ENCODE measurements at regions of chr12 and their contacts with region 1.

Region 1: DNA sequence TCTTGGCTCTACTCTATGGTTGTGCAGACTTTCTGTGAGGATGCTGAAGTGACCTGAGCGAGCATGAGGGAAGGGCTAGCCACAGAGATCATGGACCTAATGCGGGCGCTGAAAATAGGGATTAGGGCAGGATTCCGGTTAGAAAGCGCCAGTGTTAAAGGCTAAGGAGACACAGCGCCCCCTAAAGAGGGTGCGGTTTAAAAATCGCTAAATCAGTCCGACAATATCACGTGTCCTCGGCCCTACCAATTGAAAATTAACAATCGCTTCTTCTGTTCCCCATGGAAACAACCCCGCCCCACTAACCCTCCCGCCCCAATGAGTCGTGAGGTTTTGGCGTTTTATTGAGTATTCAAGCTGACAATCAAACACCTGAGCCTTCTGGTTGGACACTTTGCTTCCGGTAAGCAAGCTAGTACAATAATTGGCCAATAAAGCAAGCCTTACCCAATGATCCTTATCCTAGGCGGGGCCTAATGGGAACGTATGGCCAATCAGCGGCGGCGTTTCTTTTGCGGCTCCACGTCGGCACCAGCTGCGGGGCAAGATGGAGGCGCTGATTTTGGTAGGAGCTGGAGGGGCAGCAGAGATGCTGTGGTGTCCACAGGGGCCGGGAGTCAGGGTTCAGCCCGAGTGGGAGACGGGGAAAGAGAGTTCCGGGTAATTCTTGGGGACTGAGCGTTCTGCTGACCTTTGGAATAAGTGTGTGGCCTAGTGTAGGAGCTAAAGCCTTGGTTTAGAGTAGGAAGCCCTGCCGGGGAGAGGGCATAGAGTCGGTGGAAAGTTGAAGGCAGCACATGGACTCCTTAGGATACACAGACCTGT is at the start of gene COPZ1:
- DNase-seq: peak; percentile 96
- H3K4me3 Mint-ChIP-seq: peak within 1 kb of the TSS; percentile 92
- H3K27ac Mint-ChIP-seq: peak within 1 kb of the TSS; percentile 91
- H3K4me1 Mint-ChIP-seq: peaks cover 45% of the 10 kb centered on the region
- H3K27me3 Mint-ChIP-seq: no peaks in the 10 kb centered on the region
- total RNA-seq, gene COPZ1: 126 to 130 TPM

Region 2: DNA sequence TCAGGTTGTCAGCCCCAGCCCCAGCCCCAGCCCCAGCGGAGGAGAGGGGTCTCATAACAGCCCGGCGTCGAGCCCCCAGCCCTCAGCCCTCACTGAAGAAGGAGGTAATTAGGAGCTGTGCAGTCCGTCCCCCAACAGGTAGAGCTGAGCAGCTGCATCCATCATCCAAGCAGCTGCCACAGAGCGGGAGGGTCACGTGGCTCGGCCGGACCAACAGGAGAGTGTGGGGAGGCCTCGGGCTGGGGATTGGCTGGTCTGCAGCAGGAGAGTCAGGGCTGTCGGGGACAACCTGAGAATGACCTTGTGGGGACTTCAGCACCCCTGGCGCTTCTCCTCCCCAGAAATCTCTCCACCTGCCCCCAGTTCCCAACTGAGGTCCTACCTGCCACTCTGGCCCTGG is 165.7 kb before region 1 on chr12:
- CTCF ChIA-PET with region 1: no interaction called
- POLR2A ChIA-PET with region 1: no interaction called
- DNase-seq: peak; percentile 18
- H3K4me3 Mint-ChIP-seq: no peak overlapping the region
- H3K27ac Mint-ChIP-seq: no peak overlapping the region
- H3K4me1 Mint-ChIP-seq: no peaks in the 10 kb centered on the region
- H3K27me3 Mint-ChIP-seq: peaks cover 15% of the 10 kb centered on the region

Region 3: DNA sequence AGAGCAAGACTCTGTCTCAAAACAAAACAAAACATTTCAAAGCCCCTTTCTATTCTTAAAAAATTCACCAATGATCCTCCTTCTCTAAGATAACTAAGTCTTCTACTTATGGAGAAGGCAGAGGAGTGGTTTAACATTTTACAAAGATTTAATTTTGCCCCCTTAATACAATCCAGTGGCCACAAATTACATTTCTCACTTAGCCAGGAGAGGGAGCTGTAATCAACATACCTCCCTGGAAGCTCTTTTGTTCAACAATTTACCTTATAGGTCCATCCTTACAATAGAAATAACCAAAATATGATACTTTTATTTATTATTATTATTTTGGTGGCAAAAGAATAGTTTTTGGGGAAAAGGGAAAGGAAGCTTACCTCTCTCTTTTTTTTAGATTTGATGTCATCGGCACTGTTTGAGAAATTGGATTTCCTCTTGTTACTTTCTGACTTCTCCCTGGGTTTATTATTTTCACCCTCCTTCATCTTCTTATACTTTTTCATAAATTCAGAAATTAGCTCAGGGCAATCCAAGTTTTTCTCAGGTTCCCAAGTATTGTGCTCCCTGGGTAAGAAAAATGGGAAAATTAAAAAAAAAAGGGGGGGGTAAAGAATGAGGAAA is 73.1 kb before region 1 on chr12:
- CTCF ChIA-PET with region 1: interaction called, 15 read pairs
- POLR2A ChIA-PET with region 1: no interaction called
- DNase-seq: no peak
- H3K4me3 Mint-ChIP-seq: no peak overlapping the region
- H3K27ac Mint-ChIP-seq: no peak overlapping the region
- H3K4me1 Mint-ChIP-seq: peaks cover 2% of the 10 kb centered on the region
- H3K27me3 Mint-ChIP-seq: no peaks in the 10 kb centered on the region

Region 4: DNA sequence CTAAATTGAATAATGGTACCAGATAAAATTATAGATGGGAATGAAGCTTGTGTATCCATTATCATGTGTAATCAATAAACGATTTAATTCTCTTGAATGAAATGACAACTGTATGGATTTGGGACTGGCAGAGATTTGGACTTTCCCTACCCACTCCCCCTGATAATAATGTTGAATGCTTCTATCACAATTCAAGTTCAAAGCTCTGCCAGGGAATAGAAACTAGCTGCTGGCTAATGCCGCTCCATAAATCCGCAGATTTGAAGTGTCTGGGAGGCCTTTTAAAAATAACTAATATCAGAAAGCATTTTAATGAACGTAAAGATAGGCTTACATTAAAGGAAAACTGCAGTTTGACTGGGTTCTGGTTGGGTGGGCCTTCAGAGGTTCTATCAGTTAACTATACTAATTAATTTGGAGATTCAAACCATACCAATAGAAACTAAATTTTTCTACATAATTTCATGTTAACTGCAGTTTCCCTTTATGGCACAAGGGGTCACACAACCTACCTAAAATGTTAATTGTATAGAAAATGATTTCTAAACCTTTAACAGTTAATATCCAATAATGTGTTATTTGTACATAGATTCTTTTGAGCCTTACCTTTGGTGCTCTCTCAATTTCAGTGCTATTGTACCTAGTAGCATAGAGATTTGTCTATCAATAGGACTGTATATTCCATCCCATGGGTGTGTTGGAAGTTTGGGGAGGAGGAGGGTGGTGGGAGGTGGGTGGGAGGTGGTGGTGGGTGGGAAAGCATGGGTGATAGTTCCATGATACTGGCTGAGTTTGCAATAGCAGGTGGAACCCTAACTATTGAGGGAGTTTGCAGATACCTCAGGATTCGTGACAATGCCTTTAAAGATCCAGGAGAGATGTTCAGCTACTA is 39.4 kb before region 1 on chr12:
- CTCF ChIA-PET with region 1: interaction called, 34 read pairs
- POLR2A ChIA-PET with region 1: interaction called, 28 read pairs
- DNase-seq: no peak
- H3K4me3 Mint-ChIP-seq: no peak overlapping the region
- H3K27ac Mint-ChIP-seq: peak overlapping the region; percentile 3
- H3K4me1 Mint-ChIP-seq: peaks cover 56% of the 10 kb centered on the region
- H3K27me3 Mint-ChIP-seq: no peaks in the 10 kb centered on the region

Region 5: DNA sequence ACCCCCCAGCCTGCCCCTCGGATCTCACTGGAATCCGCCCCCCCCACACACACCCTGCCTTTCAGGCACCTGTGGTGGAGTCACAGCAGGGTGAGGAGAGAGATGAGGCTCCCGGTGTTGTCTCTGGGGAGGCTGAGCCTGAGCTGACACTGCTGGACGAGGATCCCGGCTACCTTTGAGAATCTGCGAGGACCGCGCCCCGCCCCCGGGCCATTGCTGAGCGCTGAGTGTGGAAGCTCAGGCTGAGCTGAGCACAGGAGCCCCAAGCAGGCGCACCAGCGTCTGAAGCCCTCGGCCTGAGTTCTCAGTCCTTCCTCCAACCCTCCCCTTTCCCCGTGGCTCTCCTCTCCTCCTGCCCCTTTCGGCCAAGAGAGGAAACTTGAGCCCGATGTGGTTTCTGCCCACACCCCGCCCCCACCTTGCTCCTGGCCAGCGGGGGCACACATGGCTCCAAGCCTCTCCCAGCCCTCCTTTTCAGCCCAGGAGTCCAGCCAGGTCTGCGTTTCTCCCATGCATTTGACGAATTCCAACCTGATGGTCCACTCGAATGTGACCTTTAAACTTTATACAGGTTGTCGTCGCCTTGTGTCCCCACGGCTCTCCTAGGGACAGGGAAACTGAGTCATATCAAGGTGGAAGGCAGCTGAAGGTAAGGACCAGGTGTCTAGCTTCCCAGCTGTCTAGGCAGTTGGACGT is 23.9 kb before region 1 on chr12 and contains the start of gene NFE2:
- CTCF ChIA-PET with region 1: interaction called, 72 read pairs
- POLR2A ChIA-PET with region 1: no interaction called
- DNase-seq: peak; percentile 30
- H3K4me3 Mint-ChIP-seq: no peak within 1 kb of the TSS
- H3K27ac Mint-ChIP-seq: no peak within 1 kb of the TSS
- H3K4me1 Mint-ChIP-seq: peaks cover 36% of the 10 kb centered on the region
- H3K27me3 Mint-ChIP-seq: peaks cover 67% of the 10 kb centered on the region
- total RNA-seq, gene NFE2: 0.20 TPM in 1 of 2 experiments, not detected in the other

Region 6: GRCh38 chr12:54359033-54359761 is 34.4 kb after region 1 on chr12:
- CTCF ChIA-PET with region 1: interaction called, 33 read pairs
- POLR2A ChIA-PET with region 1: interaction called, 15 read pairs
- DNase-seq: peak; percentile 97
- H3K4me3 Mint-ChIP-seq: no peak overlapping the region
- H3K27ac Mint-ChIP-seq: no peak overlapping the region
- H3K4me1 Mint-ChIP-seq: peaks cover 23% of the 10 kb centered on the region
- H3K27me3 Mint-ChIP-seq: no peaks in the 10 kb centered on the region

Region 7: GRCh38 chr12:54538136-54538700 is 213.4 kb after region 1 on chr12:
- CTCF ChIA-PET with region 1: no interaction called
- POLR2A ChIA-PET with region 1: no interaction called
- DNase-seq: no peak
- H3K4me3 Mint-ChIP-seq: no peak overlapping the region
- H3K27ac Mint-ChIP-seq: no peak overlapping the region
- H3K4me1 Mint-ChIP-seq: no peaks in the 10 kb centered on the region
- H3K27me3 Mint-ChIP-seq: no peaks in the 10 kb centered on the region

Region 8: DNA sequence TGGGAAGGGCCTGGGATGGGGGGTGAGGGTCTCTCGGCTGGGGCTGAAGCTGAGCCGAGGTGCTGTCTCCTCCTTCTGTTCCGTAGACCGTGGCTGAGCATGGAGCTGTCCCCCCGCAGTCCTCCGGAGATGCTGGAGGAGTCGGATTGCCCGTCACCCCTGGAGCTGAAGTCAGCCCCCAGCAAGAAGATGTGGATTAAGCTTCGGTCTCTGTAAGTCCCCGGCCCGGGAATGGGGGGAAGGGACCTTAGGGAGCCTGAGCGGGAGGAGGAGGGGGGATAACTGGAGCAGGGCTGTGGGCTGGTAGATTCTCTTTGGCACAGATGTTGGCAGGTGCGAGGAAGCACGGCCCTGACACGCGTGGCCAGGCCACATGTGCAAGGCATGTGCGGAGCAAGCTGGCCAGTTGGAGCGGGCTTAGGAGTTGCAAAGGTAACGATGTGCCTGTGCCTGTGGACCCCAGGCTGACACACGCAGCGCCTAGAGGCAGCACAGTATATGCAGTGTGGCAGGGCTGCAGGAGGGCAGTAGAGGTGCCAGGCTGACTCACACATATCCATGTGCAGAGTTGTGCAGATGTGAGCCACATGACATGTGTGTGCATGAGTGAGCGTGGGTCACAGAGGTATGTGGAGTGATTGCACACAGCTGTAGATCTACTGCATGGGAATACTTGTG is 225.1 kb after region 1 on chr12:
- CTCF ChIA-PET with region 1: no interaction called
- POLR2A ChIA-PET with region 1: no interaction called
- DNase-seq: no peak
- H3K4me3 Mint-ChIP-seq: peak overlapping the region; percentile 25
- H3K27ac Mint-ChIP-seq: no peak overlapping the region
- H3K4me1 Mint-ChIP-seq: peaks cover 9% of the 10 kb centered on the region
- H3K27me3 Mint-ChIP-seq: peaks cover 10% of the 10 kb centered on the region

Measured in activated CD4-positive, alpha-beta memory T cell treated with anti-CD3 and anti-CD28 coated beads, Interleukin-2, amount 10 ng/mL, durations not matched to agents 7 days and 5 days (primary cell).